ENCODE measurements at regions of chr9 and their contacts with region 1.

Region 1: DNA sequence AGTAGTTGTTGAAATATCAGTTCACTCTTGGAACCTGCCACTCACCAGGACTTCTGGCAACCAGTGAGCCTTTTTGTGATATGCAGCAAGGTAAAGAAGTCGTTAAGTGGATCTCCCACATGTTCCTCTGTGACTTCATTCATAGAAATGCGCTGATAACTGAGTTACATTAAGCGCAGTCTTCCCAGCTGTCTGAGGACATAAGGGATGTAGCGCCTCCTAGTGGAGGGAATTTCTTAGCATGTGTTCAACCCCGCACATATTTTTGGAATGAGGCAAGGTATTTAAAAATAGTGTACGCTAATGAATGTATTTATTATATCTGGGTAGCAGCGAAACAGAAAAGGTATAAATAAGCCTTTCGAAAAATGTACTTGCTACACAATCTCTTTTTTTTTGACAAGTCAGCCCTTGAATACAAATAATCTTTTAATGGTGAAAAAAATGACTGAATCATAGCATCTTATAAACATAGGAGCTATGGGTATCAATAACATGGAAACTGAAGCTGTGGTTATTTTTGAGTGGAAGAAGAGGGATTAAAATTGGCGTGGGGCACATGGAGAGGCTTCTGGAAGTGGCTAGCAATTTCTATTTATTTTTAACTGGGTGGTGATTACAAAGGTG is 38.0 kb downstream of the PALM2AKAP2 start:
- DNase-seq: peak in 4 of 6 donors; percentile 26 to 67 (median 60)
- ATAC-seq: peak; percentile 84 to 91 (median 90)
- H3K4me3 ChIP-seq: no peak overlapping the region
- H3K27ac ChIP-seq: no peak overlapping the region
- H3K4me1 ChIP-seq: peaks cover 0 to 4% (median 0%) of the 10 kb centered on the region in 3 donors
- H3K27me3 ChIP-seq: no peaks in the 10 kb centered on the region
- CTCF ChIP-seq: peak; percentile 71 to 79 (median 76)

Region 2: GRCh38 chr9:109574068-109574882 is 243.7 kb before region 1 on chr9:
- intact Hi-C with region 1: loop called in 1 of 3 experiments (anchors 10 kb)
- DNase-seq: peak in 2 of 6 donors; percentile 20 to 23
- ATAC-seq: peak in 3 of 4 donors; percentile 84 to 87 (median 86)
- H3K4me3 ChIP-seq: no peak overlapping the region
- H3K27ac ChIP-seq: no peak overlapping the region
- H3K4me1 ChIP-seq: no peaks in the 10 kb centered on the region
- H3K27me3 ChIP-seq: no peaks in the 10 kb centered on the region
- CTCF ChIP-seq: peak in 3 of 4 donors; percentile 28 to 49 (median 45)

Region 3: GRCh38 chr9:109584205-109584604 is 233.8 kb before region 1 on chr9:
- intact Hi-C with region 1: loop called in 2 of 3 experiments (anchors 10 kb)
- DNase-seq: no peak
- ATAC-seq: no peak
- H3K4me3 ChIP-seq: no peak overlapping the region
- H3K27ac ChIP-seq: no peak overlapping the region
- H3K4me1 ChIP-seq: no peaks in the 10 kb centered on the region
- H3K27me3 ChIP-seq: no peaks in the 10 kb centered on the region
- CTCF ChIP-seq: no peak

Measured in pancreas (tissue), 10 donors.